Vagina (tissue), 2 donors: ENCODE measurements at regions of chr19 and their contacts with region 1.

Region 1: DNA sequence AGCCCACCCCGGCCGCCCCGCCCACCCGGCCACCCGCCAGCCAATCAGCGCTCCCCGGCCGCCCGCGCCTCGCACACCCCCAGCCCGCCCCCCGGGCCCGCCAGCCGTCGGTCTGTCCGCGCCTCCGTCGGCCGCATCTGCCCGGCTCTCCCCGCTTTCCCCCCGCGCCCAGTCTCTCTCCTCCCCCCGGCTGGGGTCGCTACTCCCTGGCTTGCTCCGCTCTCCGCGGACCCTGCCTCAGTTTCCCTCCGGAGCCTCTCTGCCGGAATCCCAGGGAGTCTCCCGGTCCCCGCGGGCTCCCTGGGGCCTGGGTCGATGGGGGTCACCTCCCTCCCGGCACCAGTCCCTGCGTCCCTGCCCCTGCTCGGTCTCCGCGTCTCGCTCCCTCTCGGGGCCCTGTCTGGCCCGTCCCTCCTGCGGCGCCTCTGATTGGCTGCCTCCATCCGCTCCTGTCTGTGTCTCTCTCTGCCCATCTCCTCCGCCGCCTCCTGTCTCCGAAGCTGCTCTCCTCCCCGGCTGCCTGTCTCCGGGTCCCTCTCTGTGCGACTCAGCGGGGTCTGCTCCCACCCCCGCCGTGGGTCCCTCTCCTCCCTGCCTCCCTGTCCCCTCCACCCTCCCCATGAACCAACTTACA is 475 bp downstream of the IL11 start:
- DNase-seq: no peak
- H3K4me3 ChIP-seq: peak overlapping the region; percentile 20 to 38
- H3K27ac ChIP-seq: no peak overlapping the region
- H3K4me1 ChIP-seq: peaks cover 25% of the 10 kb centered on the region
- H3K27me3 ChIP-seq: peaks cover 15% of the 10 kb centered on the region
- CTCF ChIP-seq: no peak
- POLR2A ChIP-seq: no peak

Region 2: GRCh38 chr19:55301459-55302317 is 68.1 kb before region 1 on chr19:
- intact Hi-C with region 1: loop called (anchors 10 kb)
- DNase-seq: no peak
- H3K4me3 ChIP-seq: peak overlapping the region; percentile 5 to 43
- H3K27ac ChIP-seq: no peak overlapping the region
- H3K4me1 ChIP-seq: peaks cover 6% of the 10 kb centered on the region
- H3K27me3 ChIP-seq: no peaks in the 10 kb centered on the region
- CTCF ChIP-seq: peak; percentile 93 to 97 (median 96)
- POLR2A ChIP-seq: no peak